Prostate gland (tissue), 2 donors: ENCODE measurements at regions of chr1 and their contacts with region 1.

Region 1: DNA sequence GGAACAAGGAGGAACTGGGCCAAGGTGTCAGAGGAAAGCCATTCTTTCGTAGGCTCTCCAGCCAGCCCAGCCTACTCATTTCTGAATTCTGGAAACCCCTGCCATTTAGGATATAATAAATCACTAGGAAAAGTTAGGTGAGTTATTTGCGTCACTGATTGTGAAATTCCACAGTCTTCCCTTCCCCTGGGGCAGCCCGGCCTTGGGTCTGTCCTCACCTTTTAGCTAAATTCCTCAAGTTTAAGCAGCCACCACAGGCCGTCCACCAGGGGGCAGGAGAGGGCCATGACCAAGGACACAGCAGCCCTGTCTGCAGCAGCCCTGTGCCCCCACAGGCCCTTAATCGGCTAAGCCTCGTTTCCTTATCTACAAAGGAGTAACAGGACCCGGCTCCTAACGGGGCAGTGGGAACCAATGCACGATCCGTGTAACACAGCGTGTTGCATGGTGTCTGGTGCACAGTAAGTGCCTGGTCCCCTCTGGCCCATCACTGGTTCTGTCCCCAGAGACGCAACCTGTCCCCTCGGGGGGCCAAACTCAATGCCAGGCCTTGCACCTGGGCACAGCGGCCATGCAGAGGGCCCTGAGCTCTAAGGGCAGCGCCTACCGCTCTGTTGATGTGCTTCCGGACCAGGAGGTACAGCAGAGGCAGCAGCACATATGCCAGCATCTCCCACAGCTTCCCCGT is 18.1 kb downstream of the GPR157 start:
- DNase-seq: peak; percentile 90
- H3K4me3 ChIP-seq: no peak overlapping the region
- H3K27ac ChIP-seq: no peak overlapping the region
- H3K4me1 ChIP-seq: no peaks in the 10 kb centered on the region
- H3K27me3 ChIP-seq: no peaks in the 10 kb centered on the region
- CTCF ChIP-seq: peak; percentile 79 to 98 (median 94)
- POLR2A ChIP-seq: no peak

Region 2: DNA sequence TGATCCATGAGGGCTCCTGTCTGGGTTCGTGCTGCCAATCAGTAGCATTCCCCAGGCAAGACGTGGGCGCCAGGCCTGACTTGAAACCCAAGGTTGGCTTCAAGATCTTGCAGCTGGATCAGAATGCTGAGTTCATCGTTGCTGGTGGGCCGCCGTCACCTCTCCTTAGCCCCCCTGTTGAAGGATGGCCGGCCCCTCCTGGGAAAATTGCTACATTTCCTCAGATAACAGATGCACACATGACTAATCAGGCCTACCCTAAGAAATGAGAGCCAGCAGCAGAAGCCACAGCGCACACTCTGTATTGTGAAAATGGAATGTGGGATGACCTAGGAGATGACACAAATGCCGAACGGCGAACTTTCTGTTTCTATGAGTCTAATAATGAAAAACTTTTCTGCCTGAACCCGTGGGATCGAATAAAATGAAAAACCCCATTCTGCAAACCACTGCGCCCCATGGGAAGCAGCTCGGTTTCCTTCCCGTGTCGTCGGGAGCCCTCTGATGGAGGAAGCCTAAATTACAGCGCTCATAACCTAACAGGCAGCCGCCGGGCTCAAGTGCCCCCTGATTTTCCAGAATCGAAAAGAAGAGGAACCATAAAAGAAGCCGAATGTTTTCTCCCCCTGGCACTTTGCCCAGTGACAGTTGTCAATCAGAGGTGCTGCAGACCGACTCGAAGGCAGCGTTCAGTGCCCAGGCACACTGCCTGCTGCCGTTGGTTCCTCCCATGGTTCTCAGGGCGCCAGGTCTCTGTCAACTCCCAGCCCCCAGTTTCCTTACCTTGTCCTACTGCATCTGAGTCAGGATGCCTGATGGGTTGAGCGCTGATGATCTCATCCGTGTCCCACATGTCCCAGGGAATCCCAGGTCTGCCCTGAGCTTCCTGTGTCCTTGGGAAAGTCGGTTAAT is 85.6 kb after region 1 on chr1:
- intact Hi-C with region 1: loop called (anchors 1 kb)
- DNase-seq: peak; percentile 59
- H3K4me3 ChIP-seq: no peak overlapping the region
- H3K27ac ChIP-seq: no peak overlapping the region
- H3K4me1 ChIP-seq: peaks cover 5% of the 10 kb centered on the region
- H3K27me3 ChIP-seq: peaks cover 5% of the 10 kb centered on the region
- CTCF ChIP-seq: peak; percentile 38 to 89 (median 79)
- POLR2A ChIP-seq: no peak

Region 3: GRCh38 chr1:9384751-9385245 is 274.0 kb after region 1 on chr1:
- intact Hi-C with region 1: no loop called
- DNase-seq: peak; percentile 86
- H3K4me3 ChIP-seq: no peak overlapping the region
- H3K27ac ChIP-seq: peak overlapping the region; percentile 59 to 70
- H3K4me1 ChIP-seq: peaks cover 16% of the 10 kb centered on the region
- H3K27me3 ChIP-seq: no peaks in the 10 kb centered on the region
- CTCF ChIP-seq: no peak
- POLR2A ChIP-seq: no peak

Region 4: GRCh38 chr1:9486466-9487140 is 375.8 kb after region 1 on chr1:
- intact Hi-C with region 1: loop called (anchors 10 kb)
- DNase-seq: no peak
- H3K4me3 ChIP-seq: no peak overlapping the region
- H3K27ac ChIP-seq: no peak overlapping the region
- H3K4me1 ChIP-seq: no peaks in the 10 kb centered on the region
- H3K27me3 ChIP-seq: no peaks in the 10 kb centered on the region
- CTCF ChIP-seq: no peak
- POLR2A ChIP-seq: no peak

Region 5: DNA sequence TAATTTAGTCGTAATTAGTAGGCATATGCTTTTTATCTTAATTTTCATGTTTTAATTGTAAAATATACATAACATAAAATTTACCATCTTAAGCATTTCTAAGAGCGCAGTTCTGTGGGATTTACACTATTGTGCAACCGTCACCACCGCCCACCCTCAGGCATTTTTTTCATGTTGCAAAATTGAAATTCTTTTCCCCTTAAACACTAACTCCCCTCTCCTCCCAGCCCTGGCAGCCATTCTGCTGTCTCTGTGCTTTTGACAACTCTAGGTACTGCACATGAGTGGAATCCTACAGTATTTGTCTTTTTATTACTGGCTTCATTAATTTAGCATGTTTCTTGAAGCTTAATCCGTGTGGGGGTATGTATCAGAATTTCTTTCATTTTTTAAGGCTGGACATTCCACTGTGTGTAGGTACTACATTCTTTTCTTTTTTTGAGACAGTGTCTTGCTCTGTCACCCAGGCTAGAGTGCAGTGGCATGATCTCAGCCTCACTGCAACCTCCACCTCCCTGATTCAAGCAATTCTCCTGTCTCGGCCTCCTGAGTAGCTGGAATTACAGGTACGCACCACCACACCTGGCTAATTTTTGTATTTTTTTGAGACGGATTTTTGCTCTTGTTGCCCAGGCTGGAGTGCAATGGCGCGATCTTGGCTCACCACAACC is 548.6 kb after region 1 on chr1:
- intact Hi-C with region 1: no loop called
- DNase-seq: no peak
- H3K4me3 ChIP-seq: no peak overlapping the region
- H3K27ac ChIP-seq: no peak overlapping the region
- H3K4me1 ChIP-seq: no peaks in the 10 kb centered on the region
- H3K27me3 ChIP-seq: no peaks in the 10 kb centered on the region
- CTCF ChIP-seq: no peak
- POLR2A ChIP-seq: no peak